HAP-1 (cell line): ENCODE measurements at regions of chr6 and their contacts with region 1.

Region 1: DNA sequence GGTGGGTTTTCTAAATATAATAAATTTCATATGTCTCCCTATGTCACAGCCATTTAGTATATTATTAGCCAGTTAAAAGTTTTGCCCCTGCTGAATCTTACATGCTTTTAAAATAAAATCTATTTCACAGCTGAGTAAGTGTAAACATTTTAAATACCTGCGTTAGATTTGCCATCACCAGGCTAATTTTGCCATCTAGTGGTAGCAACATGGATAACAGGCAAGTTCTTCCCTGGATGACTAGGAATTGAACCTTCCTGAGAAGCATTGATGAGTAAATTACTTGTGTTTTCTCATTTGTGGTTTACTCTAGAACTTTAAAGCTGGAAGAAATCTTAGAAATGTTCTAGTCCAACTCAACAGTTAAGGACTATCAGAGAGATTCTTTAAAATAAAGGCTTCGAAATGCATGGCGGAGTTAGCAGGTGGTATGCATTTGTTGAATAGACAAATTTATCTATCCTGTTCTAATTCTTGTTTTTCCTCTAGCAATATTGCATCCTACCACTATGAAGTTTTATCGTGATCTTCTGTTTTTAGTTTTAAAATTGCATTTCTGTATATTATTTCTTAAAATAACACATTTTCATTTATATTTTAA is 2.6 kb downstream of the PRSS35 start:
- DNase-seq: peak; percentile 61 to 73
- H3K4me3 ChIP-seq: no peak overlapping the region
- H3K4me1 ChIP-seq: peaks cover 22% of the 10 kb centered on the region
- H3K27me3 ChIP-seq: no peaks in the 10 kb centered on the region

Region 2: DNA sequence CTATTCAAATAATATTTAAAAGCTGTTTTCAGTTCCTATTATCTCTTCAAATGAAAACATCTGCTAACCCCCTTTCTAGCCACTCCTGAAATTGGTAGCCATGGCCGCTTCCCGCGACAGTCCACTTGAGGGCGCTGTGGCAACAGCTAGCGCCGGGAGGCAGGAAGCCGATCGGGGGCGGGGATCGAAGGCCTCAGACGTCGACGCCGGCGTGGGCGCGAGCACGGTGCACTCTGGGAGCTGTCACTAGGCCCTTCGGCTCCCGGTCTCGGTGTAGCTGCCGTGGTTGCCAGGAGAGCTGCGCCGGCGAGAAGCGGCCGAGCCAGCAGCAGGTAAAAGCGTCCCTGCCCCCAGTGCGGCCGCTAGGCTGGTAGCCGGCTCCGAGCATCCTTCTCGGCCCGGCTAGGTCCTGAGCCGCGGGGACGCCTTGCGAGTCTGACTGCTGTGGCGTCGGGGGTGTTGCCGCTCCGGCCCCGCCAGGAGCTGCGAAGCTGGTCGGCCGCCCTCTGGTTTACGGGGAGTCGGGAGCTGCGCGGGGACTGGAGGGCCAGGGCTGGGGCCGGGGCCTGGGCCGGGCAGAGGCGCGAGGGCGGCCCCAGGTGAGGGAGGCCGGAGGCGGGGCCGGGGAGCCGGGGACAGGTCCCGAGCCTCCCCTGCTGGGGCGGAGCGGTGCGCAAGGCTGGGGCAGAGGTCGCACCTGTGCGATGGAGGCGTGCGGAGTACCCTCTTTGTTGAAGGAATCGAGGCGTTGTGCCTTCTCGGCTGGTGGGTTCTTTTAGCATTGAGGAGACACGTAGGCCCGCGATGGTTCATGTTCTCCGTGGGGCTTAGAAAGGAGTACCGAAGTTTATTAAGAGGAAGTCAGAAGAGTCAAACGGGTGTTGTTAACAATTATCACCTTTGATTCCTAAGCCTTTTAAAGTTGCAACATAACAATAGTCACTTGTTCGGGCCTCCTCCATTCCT is 447.2 kb before region 1 on chr6 and contains the start of gene DOP1A:
- in situ Hi-C with region 1: loop called (anchors 10 kb)
- DNase-seq: peak; percentile 88 to 97
- H3K4me3 ChIP-seq: peak within 1 kb of the TSS; percentile 73
- H3K4me1 ChIP-seq: peaks cover 6% of the 10 kb centered on the region; the same call in 1 of the 2 replicates
- H3K27me3 ChIP-seq: no peaks in the 10 kb centered on the region

Region 3: GRCh38 chr6:83221889-83222479 is 293.0 kb before region 1 on chr6:
- in situ Hi-C with region 1: loop called (anchors 5 kb)
- DNase-seq: peak in 1 of 2 experiments; percentile 58
- H3K4me3 ChIP-seq: no peak overlapping the region
- H3K4me1 ChIP-seq: no peaks in the 10 kb centered on the region
- H3K27me3 ChIP-seq: no peaks in the 10 kb centered on the region

Region 4: DNA sequence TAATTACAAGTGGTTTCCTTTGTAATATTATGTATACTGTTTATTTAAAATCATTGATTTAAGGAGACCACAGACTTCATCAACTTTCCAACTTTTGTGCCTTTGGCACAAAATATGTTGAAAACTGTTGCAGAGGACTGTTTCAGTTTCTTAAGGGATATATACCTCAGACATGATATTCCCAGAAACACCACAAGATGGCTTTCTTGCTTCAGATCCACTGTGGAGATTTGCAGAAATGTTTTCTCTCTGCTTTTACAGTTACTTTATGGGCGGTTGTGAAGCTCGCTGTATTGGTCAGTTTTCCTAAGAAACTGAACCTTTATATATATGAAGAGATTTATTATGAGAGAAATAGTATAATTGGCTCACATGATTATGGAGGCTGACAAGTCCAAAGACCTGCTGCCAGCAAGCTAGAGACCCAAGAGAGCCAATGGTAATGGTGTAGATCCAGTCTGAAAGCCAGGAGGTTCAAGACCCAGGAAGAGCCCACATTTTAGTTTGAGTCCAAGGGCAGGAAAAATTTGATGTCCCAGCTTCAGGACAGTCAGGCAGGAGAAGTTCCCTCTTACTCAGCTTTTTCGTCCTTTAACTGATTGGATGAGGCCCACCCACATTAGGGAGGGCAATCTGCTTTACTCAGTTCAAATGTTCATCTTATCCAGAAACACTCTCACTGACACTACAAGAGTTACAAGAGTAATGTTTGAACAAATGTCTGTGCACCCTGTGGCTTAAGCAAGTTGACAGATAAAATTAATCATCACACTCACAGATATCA is 96.9 kb before region 1 on chr6:
- in situ Hi-C with region 1: loop called (anchors 10 kb)
- DNase-seq: peak; percentile 14 to 78
- H3K4me3 ChIP-seq: no peak overlapping the region
- H3K4me1 ChIP-seq: no peaks in the 10 kb centered on the region
- H3K27me3 ChIP-seq: no peaks in the 10 kb centered on the region

Region 5: GRCh38 chr6:83430611-83431563 is 84.1 kb before region 1 on chr6 and contains the start of gene ME1:
- in situ Hi-C with region 1: loop called (anchors 5 kb)
- DNase-seq: peak; percentile 72 to 90
- H3K4me3 ChIP-seq: peak within 1 kb of the TSS; percentile 53
- H3K4me1 ChIP-seq: peaks cover 32% of the 10 kb centered on the region
- H3K27me3 ChIP-seq: no peaks in the 10 kb centered on the region

Region 6: GRCh38 chr6:83685481-83685880 is 170.5 kb after region 1 on chr6:
- in situ Hi-C with region 1: no loop called
- DNase-seq: no peak
- H3K4me3 ChIP-seq: no peak overlapping the region
- H3K4me1 ChIP-seq: no peaks in the 10 kb centered on the region
- H3K27me3 ChIP-seq: no peaks in the 10 kb centered on the region